ENCODE measurements at regions of chr2 and their contacts with region 1.

Region 1: GRCh38 chr2:36544638-36545338 is 53.2 kb downstream of the FEZ2 start:
- DNase-seq: no peak
- H3K4me3 ChIP-seq: no peak overlapping the region
- H3K27ac ChIP-seq: peak overlapping the region; percentile 13 to 44
- H3K4me1 ChIP-seq: no peaks in the 10 kb centered on the region
- H3K27me3 ChIP-seq: no peaks in the 10 kb centered on the region
- CTCF ChIP-seq: peak in 1 of 3 experiments; percentile 21

Region 2: GRCh38 chr2:35989503-35989902 is 555.3 kb before region 1 on chr2:
- intact Hi-C with region 1: no loop called
- DNase-seq: no peak
- H3K4me3 ChIP-seq: no peak overlapping the region
- H3K27ac ChIP-seq: no peak overlapping the region
- H3K4me1 ChIP-seq: no peaks in the 10 kb centered on the region
- H3K27me3 ChIP-seq: no peaks in the 10 kb centered on the region
- CTCF ChIP-seq: no peak

Region 3: DNA sequence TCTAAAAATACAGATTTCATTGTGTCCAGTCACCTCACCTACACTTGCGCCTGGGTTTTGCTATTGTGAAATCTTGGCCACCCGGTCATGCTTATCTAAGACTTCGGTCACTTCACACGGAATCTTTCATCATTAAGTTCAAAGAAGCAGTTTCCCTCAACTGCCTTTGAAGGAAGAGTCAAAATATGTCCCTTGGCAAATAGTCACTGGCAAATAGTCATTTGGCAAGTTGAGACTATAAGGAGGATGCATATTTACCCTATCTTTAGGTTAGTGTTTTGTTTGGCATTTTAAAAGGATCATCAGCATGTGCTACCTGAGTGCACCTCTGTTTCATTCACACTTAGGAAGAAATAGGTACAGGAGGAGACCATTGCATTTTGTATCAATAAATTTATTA is 42.7 kb before region 1 on chr2:
- intact Hi-C with region 1: loop called (anchors 5 kb)
- DNase-seq: no peak
- H3K4me3 ChIP-seq: no peak overlapping the region
- H3K27ac ChIP-seq: peak overlapping the region; percentile 18 to 34
- H3K4me1 ChIP-seq: peaks cover 0 to 3% of the 10 kb centered on the region in 2 donors
- H3K27me3 ChIP-seq: no peaks in the 10 kb centered on the region
- CTCF ChIP-seq: no peak

Region 4: DNA sequence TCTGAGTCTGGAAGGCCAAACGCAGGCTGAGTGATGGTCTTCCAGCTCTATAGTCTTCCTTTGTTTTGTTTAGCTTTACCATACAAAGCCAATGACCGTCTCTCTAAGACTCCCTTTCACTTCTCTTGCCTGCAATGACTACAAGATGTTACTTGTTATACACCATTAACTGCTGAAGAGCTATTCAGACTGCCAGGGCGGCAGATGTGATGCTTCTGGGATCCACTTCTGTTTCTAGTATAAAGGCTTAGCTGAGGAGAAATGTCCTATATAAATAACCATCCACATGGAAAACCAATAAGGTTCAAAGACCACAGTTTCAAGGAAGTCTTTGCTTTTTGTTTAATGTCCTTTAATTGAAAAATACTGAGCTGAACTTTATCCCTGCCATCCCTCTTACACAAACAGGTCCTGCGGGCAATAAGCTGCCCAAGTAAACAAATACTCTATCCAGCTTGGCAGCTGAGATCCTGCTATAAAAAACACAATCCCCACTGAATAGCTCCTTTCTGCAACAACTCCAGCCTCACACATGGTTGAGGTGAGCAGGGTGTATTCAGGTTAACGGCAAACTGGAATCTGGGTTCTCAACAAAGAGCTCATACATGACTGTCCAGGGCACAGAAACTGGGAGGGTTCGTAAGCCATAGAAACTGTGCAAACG is 276.3 kb after region 1 on chr2:
- intact Hi-C with region 1: no loop called
- DNase-seq: no peak
- H3K4me3 ChIP-seq: no peak overlapping the region
- H3K27ac ChIP-seq: no peak overlapping the region
- H3K4me1 ChIP-seq: peaks cover 0 to 3% of the 10 kb centered on the region in 2 donors
- H3K27me3 ChIP-seq: no peaks in the 10 kb centered on the region
- CTCF ChIP-seq: no peak